IMR-90 (cell line): ENCODE measurements at regions of chr1 and their contacts with region 1.

Region 1: GRCh38 chr1:202692959-202693555 is 17.2 kb downstream of the SYT2 start:
- DNase-seq: peak; percentile 71
- ATAC-seq: peak; percentile 95
- H3K4me3 ChIP-seq: no peak overlapping the region
- H3K27ac ChIP-seq: no peak overlapping the region
- H3K4me1 ChIP-seq: no peaks in the 10 kb centered on the region
- H3K27me3 ChIP-seq: peaks cover 60% of the 10 kb centered on the region
- CTCF ChIP-seq: 0 out of 2 replicates have a peak, but pooled peaks have one; percentile 9
- POLR2A ChIP-seq: no peak
- RAD21 ChIP-seq: no peak; the same call in 1 of the 2 replicates

Region 2: DNA sequence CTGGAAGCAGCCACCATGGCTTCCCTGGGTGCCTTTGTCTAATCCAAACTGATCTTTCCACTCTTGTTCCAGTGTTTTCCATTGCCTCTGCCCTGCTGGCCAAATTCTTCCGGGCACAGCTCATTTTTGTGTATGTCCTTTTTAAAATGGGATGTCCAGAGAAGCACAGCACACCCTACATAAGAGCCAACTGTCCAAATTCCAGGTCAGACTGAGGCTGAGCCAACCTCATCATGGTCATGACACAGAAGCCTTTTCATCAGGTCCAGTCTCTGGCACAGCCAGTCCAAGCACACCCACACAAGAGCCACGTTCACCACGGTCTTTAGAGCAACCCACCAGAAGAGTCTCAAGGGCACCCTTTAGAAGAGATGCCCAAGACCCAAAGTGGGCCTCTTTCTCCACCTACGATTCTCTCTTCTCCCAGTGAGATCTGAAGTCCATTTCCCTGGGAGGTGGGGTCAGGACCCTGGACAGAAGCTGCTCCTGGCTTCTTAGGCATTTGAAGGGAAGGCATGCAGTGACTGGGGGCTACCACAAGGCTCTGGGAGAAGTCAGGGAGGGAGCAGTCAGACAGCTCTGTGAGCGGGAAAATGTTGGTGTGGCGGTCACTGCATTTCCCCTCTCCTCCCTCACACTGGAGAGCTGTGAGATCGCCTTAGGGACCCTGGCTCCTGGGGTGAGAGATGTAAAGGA is 36.0 kb before region 1 on chr1:
- CTCF ChIA-PET with region 1: no interaction called
- POLR2A ChIA-PET with region 1: no interaction called
- dilution Hi-C with region 1: no loop called
- in situ Hi-C with region 1: no loop called
- intact Hi-C with region 1: loop called (anchors 2 kb)
- DNase-seq: peak; percentile 46
- ATAC-seq: peak; percentile 87
- H3K4me3 ChIP-seq: no peak overlapping the region
- H3K27ac ChIP-seq: no peak overlapping the region
- H3K4me1 ChIP-seq: no peaks in the 10 kb centered on the region
- H3K27me3 ChIP-seq: peaks cover 79% of the 10 kb centered on the region
- CTCF ChIP-seq: peak; percentile 24; the same call in 1 of the 2 replicates
- POLR2A ChIP-seq: no peak
- RAD21 ChIP-seq: no peak